GM12878 (cell line): ENCODE measurements at regions of chr1 and their contacts with region 1.

Region 1: DNA sequence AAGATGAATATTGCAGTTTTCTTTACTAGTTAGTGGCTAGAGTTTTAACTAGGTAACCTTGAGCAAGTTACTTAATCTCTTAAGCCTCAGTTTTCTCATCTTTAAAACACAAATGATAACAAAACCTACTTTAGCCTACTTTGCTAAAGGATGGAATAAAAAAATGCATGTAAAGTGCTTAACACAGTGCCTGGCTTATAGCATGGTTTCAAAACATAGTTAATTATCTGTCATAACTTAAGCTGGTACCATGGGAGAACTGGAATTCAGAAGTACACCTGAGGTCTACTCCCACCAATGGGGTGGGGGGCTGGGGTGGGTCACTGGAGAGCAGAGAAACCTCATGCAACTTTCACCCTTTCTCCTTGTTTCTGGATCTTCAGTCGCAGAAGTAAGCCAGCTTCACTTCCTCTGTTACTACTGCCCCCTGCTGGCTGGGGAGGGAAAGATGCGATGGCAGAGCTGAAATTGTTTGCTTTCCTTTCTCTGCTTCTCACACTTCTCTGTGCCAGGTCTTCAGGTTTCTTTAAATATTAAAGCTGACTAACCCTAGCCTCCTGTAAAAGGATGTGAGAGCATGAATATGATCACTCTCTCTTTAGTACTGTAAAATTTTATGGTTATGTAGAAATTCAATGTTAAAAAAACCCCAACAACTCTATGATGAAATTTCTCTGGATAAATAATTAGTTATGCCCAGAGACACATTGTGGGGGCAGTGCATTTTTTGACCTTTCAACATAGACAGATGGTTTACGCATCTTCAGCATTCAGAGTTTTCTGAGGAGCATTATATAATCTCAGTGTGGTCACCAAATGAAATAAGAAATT is 324.2 kb downstream of the HLX start:
- DNase-seq: peak; percentile 30
- ATAC-seq: peak; percentile 87
- H3K4me3 ChIP-seq: no peak overlapping the region
- H3K27ac ChIP-seq: no peak overlapping the region
- H3K4me1 ChIP-seq: no peaks in the 10 kb centered on the region
- H3K27me3 ChIP-seq: no peaks in the 10 kb centered on the region
- CTCF ChIP-seq: peak; percentile 80 to 93 (median 90)
- EP300 ChIP-seq: no peak
- POLR2A ChIP-seq: no peak
- RAD21 ChIP-seq: peak; percentile 98

Region 2: DNA sequence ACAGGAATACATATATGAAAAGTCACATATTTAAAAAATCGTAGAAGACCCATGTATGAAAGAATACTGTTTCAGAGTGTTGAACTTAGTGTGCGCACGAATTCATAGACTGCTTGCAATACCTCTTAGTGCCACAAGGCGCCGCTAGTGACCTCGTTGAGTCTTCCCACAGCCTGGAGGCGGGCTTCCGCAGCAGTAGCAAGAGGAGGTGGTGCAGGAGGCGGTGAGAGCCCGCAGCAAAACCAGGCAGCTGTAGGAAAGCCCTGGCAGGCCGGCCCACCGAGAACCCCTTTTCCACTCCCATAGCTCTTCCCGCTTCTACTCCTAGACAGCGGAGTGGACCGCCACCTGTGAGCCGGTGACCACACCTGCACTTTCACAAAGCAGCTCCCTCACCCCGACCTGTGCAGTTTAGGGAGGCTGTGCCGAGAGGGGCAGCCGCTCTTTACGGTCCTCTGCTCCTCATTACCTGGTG is 393.2 kb before region 1 on chr1:
- CTCF ChIA-PET with region 1: interaction called, 10 read pairs
- POLR2A ChIA-PET with region 1: no interaction called
- RAD21 ChIA-PET with region 1: interaction called, 9 read pairs
- SMC1A ChIA-PET with region 1: interaction called, 8 read pairs
- in situ Hi-C with region 1: no loop called
- intact Hi-C with region 1: loop called (anchors 1 kb)
- DNase-seq: peak; percentile 8
- ATAC-seq: peak; percentile 95
- H3K4me3 ChIP-seq: no peak overlapping the region
- H3K27ac ChIP-seq: no peak overlapping the region
- H3K4me1 ChIP-seq: no peaks in the 10 kb centered on the region
- H3K27me3 ChIP-seq: no peaks in the 10 kb centered on the region; a peak in 1 of 4 replicates
- CTCF ChIP-seq: peak; percentile 93 to 96 (median 94); a peak in 5 of 6 replicates
- EP300 ChIP-seq: no peak
- POLR2A ChIP-seq: no peak
- RAD21 ChIP-seq: peak; percentile 75

Region 3: DNA sequence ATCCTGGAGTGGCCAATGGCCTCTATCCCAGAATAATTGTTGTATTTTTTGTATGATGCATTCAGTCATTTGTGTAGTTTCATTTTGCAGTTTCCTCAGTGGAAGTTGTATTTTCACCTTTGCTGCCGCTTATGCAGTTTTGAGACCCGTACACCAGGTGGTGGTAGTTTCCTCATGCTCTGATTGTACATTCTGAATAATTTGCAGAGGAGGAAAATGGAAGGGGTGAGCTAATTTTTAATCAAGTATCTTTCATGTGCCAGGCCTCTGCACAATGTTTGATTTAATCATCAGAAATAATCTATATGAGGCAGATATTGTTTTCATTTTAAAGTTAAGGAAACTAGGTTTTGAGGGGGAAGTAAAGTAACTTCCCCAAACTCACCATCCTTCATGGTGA is 294.7 kb before region 1 on chr1:
- CTCF ChIA-PET with region 1: interaction called, 150 read pairs
- POLR2A ChIA-PET with region 1: no interaction called
- RAD21 ChIA-PET with region 1: interaction called, 48 read pairs
- SMC1A ChIA-PET with region 1: interaction called, 99 read pairs
- in situ Hi-C with region 1: no loop called
- intact Hi-C with region 1: loop called (anchors 1 kb)
- DNase-seq: no peak
- ATAC-seq: peak; percentile 68
- H3K4me3 ChIP-seq: no peak overlapping the region
- H3K27ac ChIP-seq: no peak overlapping the region
- H3K4me1 ChIP-seq: no peaks in the 10 kb centered on the region
- H3K27me3 ChIP-seq: no peaks in the 10 kb centered on the region; a peak in 2 of 4 replicates
- CTCF ChIP-seq: peak; percentile 50 to 57 (median 53); a peak in 5 of 6 replicates
- EP300 ChIP-seq: no peak
- POLR2A ChIP-seq: no peak
- RAD21 ChIP-seq: peak; percentile 78

Region 4: DNA sequence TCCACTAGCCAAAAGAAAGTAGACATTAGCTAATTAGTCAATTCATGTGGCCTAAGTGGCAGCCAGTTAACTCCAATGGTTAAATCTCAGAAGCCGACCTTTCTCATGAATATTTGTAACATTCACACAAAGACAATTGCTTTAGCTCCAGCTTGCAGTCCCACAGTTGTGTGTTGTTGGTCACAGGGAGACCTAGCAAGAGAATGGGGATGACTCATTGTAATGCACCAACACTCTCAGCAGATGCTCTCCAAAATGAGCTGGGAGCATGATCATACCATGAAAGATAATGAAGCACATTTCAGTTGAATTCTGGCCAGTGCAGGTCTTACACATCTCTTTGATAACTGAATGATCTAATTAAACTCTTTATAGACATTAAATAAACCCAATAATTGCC is 163.8 kb before region 1 on chr1:
- CTCF ChIA-PET with region 1: interaction called, 10 read pairs
- POLR2A ChIA-PET with region 1: no interaction called
- RAD21 ChIA-PET with region 1: interaction called, 3 read pairs
- SMC1A ChIA-PET with region 1: no interaction called
- in situ Hi-C with region 1: no loop called
- intact Hi-C with region 1: no loop called
- DNase-seq: no peak
- ATAC-seq: peak; percentile 45
- H3K4me3 ChIP-seq: no peak overlapping the region
- H3K27ac ChIP-seq: no peak overlapping the region
- H3K4me1 ChIP-seq: no peaks in the 10 kb centered on the region
- H3K27me3 ChIP-seq: no peaks in the 10 kb centered on the region
- CTCF ChIP-seq: no peak
- EP300 ChIP-seq: no peak
- POLR2A ChIP-seq: no peak
- RAD21 ChIP-seq: no peak

Region 5: DNA sequence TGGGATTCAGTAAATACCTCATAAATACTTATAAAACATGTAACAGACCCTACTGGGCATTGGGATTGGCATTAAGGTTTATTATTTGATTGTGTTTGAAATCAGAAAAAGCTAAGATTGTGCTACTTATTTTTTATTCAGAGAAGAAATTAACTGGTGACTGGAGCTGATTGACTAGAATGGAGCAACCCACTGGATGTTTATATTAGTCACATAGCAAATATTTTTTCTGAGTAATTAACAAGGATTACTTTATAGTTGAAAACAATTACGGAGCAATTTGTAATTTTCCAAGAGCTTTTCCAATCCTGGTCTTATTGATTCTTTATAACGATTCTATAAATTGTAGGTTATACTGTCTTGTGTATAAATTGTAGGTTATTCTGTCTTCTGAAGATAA is 115.5 kb before region 1 on chr1:
- CTCF ChIA-PET with region 1: interaction called, 4 read pairs
- POLR2A ChIA-PET with region 1: no interaction called
- RAD21 ChIA-PET with region 1: interaction called, 5 read pairs
- SMC1A ChIA-PET with region 1: interaction called, 11 read pairs
- in situ Hi-C with region 1: no loop called
- intact Hi-C with region 1: no loop called
- DNase-seq: no peak
- ATAC-seq: no peak
- H3K4me3 ChIP-seq: no peak overlapping the region
- H3K27ac ChIP-seq: no peak overlapping the region
- H3K4me1 ChIP-seq: no peaks in the 10 kb centered on the region
- H3K27me3 ChIP-seq: no peaks in the 10 kb centered on the region; a peak in 1 of 4 replicates
- CTCF ChIP-seq: no peak
- EP300 ChIP-seq: no peak
- POLR2A ChIP-seq: no peak
- RAD21 ChIP-seq: no peak

Region 6: GRCh38 chr1:221166559-221167318 is 36.7 kb before region 1 on chr1:
- CTCF ChIA-PET with region 1: interaction called, 40 read pairs
- POLR2A ChIA-PET with region 1: interaction called, 3 read pairs
- RAD21 ChIA-PET with region 1: interaction called, 28 read pairs
- SMC1A ChIA-PET with region 1: interaction called, 52 read pairs
- in situ Hi-C with region 1: no loop called
- intact Hi-C with region 1: loop called (anchors 5 kb)
- DNase-seq: peak; percentile 53
- ATAC-seq: peak; percentile 92
- H3K4me3 ChIP-seq: no peak overlapping the region
- H3K27ac ChIP-seq: 0 out of 2 replicates have a peak overlapping the region, but pooled peaks have one; percentile 8
- H3K4me1 ChIP-seq: peaks cover 15% of the 10 kb centered on the region
- H3K27me3 ChIP-seq: 0 out of 4 replicates have a peak, but pooled peaks cover 0 to 2% of the 10 kb centered on the region in 2 experiments
- CTCF ChIP-seq: no peak
- EP300 ChIP-seq: peak; percentile 63 to 75; a peak in 3 of 4 replicates
- POLR2A ChIP-seq: no peak
- RAD21 ChIP-seq: no peak

Region 7: DNA sequence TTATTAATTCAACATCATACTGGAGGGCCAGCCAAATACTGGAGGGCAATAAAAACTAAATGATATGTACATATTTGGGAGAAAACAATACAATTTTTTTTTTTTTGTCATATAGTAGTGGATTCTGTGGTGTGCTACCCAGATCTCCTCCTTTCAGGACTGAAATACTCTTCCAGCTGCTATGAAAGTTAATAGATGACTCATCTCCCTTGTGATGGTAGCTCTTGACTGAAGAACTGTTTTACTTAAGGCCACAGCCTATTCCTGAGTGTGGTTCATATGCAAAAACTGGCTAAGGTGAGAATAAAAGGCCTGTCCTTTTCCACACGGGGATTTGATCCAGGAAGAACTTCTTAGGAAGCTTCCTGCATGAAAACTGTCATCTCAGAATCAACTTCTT is 16.3 kb before region 1 on chr1:
- CTCF ChIA-PET with region 1: interaction called, 17 read pairs
- POLR2A ChIA-PET with region 1: no interaction called
- RAD21 ChIA-PET with region 1: interaction called, 7 read pairs
- SMC1A ChIA-PET with region 1: interaction called, 12 read pairs
- in situ Hi-C with region 1: no loop called
- intact Hi-C with region 1: no loop called
- DNase-seq: no peak
- ATAC-seq: peak; percentile 69
- H3K4me3 ChIP-seq: no peak overlapping the region
- H3K27ac ChIP-seq: no peak overlapping the region
- H3K4me1 ChIP-seq: no peaks in the 10 kb centered on the region
- H3K27me3 ChIP-seq: no peaks in the 10 kb centered on the region
- CTCF ChIP-seq: no peak
- EP300 ChIP-seq: no peak
- POLR2A ChIP-seq: no peak
- RAD21 ChIP-seq: no peak

Region 8: GRCh38 chr1:221366495-221367095 is 163.2 kb after region 1 on chr1:
- CTCF ChIA-PET with region 1: no interaction called
- POLR2A ChIA-PET with region 1: no interaction called
- RAD21 ChIA-PET with region 1: no interaction called
- SMC1A ChIA-PET with region 1: no interaction called
- in situ Hi-C with region 1: no loop called
- intact Hi-C with region 1: no loop called
- DNase-seq: no peak
- ATAC-seq: no peak
- H3K4me3 ChIP-seq: no peak overlapping the region
- H3K27ac ChIP-seq: no peak overlapping the region
- H3K4me1 ChIP-seq: no peaks in the 10 kb centered on the region
- H3K27me3 ChIP-seq: no peaks in the 10 kb centered on the region
- CTCF ChIP-seq: no peak
- EP300 ChIP-seq: no peak
- POLR2A ChIP-seq: no peak
- RAD21 ChIP-seq: no peak